Head of caudate nucleus (tissue), 42 donors: ENCODE measurements at regions of chr7 and their contacts with region 1.

Region 1: GRCh38 chr7:37323966-37324365 is 124.7 kb downstream of the ELMO1 start:
- DNase-seq: no peak

Region 2: DNA sequence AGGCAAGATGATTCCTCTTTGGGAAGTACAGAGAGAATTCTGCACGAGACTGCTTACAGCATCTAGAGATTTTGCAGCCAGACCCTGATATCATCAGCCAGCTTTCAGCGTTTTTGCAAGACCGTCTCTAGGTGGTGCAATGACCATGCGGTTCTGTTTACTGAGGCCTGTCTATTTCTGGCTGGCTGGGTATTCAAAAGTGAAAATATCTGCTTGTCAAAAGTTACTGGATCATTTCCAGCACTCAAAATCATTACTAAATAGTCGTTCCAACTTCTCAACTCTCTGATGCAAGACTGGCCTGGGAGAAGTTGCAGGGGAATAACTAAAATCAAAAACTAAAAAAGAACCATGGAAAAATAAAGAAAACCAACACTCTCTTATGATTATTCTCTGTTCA is 115.4 kb before region 1 on chr7:
- intact Hi-C with region 1: no loop called
- DNase-seq: peak in 41 of 42 donors; percentile 11 to 89 (median 74)

Region 3: DNA sequence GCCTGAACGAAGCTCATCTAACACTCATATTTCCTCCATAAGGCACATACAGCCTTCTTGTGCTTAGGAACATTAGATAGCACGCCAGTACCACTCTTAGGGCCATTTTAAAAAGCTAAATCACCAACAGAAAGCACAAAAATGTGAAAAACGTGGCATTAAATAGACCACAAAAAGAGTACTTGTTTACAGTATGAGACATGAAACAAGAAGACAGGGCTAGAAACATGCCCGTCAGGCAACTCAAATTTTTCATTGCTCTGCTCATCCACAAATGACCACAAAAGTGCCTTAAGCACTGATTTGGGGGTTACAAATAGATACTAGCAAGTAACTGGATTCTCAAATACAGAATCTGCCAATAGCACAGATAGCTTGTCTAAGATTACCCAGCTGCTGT is 56.9 kb after region 1 on chr7:
- intact Hi-C with region 1: loop called (anchors 2 kb)
- DNase-seq: no peak

Region 4: DNA sequence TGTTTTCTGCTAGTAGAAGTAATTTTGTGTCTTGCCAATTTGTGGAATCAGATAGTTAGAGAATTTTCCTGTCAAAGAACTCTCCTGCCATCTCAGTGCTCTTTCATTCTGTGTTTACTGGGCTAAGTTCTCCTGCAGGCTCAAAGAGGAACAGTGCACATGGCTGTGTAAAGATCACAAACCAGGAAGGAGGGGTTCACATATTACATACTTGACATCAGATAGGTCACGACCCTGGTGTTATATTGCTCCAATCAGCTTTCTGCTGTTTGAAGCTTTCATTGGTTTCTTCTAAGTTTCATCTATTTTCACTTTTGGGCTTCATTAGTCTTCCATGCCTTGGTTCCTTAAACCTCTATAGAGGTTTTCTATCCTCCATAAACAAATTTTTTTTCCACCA is 138.2 kb after region 1 on chr7:
- intact Hi-C with region 1: no loop called
- DNase-seq: no peak